ENCODE measurements at regions of chr20 and their contacts with region 1.

Region 1: GRCh38 chr20:37095599-37096414 is at the start of gene RBL1:
- DNase-seq: peak; percentile 69 to 93 (median 85)
- ATAC-seq: peak; percentile 78
- H3K4me3 ChIP-seq: peak within 1 kb of the TSS; percentile 79 to 96
- H3K4me3 Mint-ChIP-seq: peak within 1 kb of the TSS; percentile 99
- H3K27ac ChIP-seq: peak within 1 kb of the TSS; percentile 79 to 89
- H3K27ac Mint-ChIP-seq: peak within 1 kb of the TSS; percentile 99
- H3K4me1 ChIP-seq: peaks cover 18% of the 10 kb centered on the region
- H3K4me1 Mint-ChIP-seq: peaks cover 28% of the 10 kb centered on the region
- H3K27me3 ChIP-seq: no peaks in the 10 kb centered on the region
- H3K27me3 Mint-ChIP-seq: no peaks in the 10 kb centered on the region
- CTCF ChIP-seq: no peak
- total RNA-seq, gene RBL1: 29.6 to 32.6 TPM

Region 2: DNA sequence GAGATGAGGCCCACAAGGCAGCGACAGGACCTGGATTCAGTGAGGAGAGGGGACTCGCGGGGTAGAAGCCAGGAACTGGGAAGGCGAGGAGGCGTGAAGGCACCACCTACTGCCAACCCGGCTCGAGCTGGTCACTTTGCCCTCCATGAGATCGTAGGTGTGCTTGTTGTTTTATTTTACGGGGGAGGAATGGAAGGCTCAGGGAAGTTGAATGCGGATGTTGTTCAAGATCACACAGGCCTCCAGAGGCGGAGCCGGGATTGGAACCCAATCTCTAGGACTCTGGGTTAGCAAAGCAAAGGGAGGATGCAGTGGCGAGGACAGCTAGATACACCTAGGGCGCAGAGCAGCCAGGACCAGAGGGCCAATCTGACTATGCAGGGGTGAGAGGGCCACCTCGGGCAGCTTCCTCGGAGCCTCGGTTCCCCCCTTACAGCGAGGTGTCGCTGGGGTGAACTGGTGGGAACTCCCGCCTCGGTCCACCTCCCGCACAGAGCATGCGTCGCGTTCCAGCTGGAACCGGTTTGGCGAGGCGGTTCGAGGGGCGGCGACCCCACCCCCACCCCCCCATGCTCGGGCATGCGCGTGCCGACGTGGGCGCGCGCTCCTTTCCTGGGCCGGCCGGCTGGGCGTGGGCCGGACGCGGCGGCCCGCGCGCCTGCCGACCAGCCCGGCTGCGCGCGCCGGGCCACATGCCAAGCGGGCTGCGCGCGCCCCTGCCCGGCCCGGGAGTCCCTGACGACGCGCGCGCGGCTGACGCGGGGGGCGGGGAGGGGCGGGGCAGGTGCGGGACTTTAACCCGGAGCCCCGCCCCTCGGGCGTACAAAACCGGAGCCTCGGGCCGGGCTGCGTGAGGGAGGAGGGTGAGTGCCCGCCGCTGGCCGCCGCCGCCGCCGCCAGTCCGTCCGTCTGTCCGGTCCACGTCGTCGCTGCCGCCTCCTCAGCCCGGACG is 634.9 kb before region 1 on chr20:
- CTCF ChIA-PET with region 1: no interaction called
- POLR2A ChIA-PET with region 1: no interaction called
- intact Hi-C with region 1: loop called in 1 of 2 experiments (anchors 5 kb)
- DNase-seq: peak; percentile 78 to 97 (median 89)
- ATAC-seq: peak; percentile 83
- H3K4me3 ChIP-seq: peak overlapping the region; percentile 47 to 52
- H3K4me3 Mint-ChIP-seq: peak overlapping the region; percentile 80
- H3K27ac ChIP-seq: peak overlapping the region; percentile 69 to 90
- H3K27ac Mint-ChIP-seq: peak overlapping the region; percentile 89
- H3K4me1 ChIP-seq: peaks cover 45% of the 10 kb centered on the region
- H3K4me1 Mint-ChIP-seq: peaks cover 44% of the 10 kb centered on the region
- H3K27me3 ChIP-seq: no peaks in the 10 kb centered on the region
- H3K27me3 Mint-ChIP-seq: no peaks in the 10 kb centered on the region
- CTCF ChIP-seq: no peak

Region 3: DNA sequence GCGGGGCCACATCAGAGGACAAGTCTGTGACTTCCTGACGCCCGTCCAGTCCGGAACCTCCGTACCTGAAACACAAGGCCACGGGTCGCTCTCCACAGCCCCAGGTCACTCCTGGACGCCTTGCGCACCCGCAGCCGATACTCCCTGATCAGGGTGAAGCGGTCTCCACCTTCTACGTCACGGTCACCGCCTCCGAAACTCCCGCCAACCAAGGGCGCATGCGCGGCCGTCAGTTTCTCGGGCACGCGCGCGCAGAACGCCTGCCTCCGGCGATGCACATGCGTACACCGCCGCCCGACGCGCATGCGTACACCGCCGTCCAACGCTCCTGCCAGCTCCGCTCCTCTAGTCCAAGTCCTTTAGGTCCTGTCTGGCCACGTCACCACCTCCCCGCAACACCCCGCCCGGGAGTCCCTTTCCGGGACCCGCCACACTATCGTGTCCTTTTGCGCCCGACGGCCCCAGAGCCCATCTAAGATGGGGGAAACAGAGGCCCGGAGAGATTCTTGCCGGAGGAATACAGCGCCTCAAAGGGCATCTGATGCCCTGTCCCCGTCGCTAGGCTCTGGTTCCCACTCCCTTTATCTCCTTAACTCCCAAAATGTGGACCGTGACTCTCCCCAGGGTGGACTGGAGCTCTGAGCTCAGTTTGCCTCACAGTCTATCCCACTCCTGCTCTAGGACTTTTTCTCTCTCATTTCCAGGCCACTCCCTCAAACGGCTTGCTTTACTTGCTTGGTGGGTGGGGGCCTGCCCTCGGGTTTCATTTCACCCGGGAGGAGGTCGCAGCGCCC is 322.0 kb before region 1 on chr20 and contains the start of gene DSN1:
- CTCF ChIA-PET with region 1: no interaction called
- POLR2A ChIA-PET with region 1: no interaction called
- intact Hi-C with region 1: loop called in 1 of 2 experiments (anchors 5 kb)
- DNase-seq: peak; percentile 94 to 99 (median 98)
- ATAC-seq: peak; percentile 82
- H3K4me3 ChIP-seq: peak within 1 kb of the TSS; percentile 74 to 80
- H3K4me3 Mint-ChIP-seq: peak within 1 kb of the TSS; percentile 99
- H3K27ac ChIP-seq: peak within 1 kb of the TSS; percentile 66 to 92
- H3K27ac Mint-ChIP-seq: peak within 1 kb of the TSS; percentile 95
- H3K4me1 ChIP-seq: peaks cover 8% of the 10 kb centered on the region
- H3K4me1 Mint-ChIP-seq: peaks cover 11% of the 10 kb centered on the region
- H3K27me3 ChIP-seq: no peaks in the 10 kb centered on the region
- H3K27me3 Mint-ChIP-seq: no peaks in the 10 kb centered on the region
- CTCF ChIP-seq: no peak
- total RNA-seq, gene DSN1: 12.2 to 13.1 TPM

Region 4: GRCh38 chr20:37007898-37008649 is 87.7 kb before region 1 on chr20:
- CTCF ChIA-PET with region 1: interaction called, 24 read pairs
- POLR2A ChIA-PET with region 1: interaction called, 10 read pairs
- intact Hi-C with region 1: loop called (anchors 5 kb)
- DNase-seq: peak in 6 of 9 experiments; percentile 20 to 82 (median 55)
- ATAC-seq: peak; percentile 99
- H3K4me3 ChIP-seq: no peak overlapping the region
- H3K4me3 Mint-ChIP-seq: peak overlapping the region; percentile 13
- H3K27ac ChIP-seq: peak overlapping the region in 1 of 2 experiments; percentile 58
- H3K27ac Mint-ChIP-seq: peak overlapping the region; percentile 84
- H3K4me1 ChIP-seq: peaks cover 12% of the 10 kb centered on the region
- H3K4me1 Mint-ChIP-seq: peaks cover 18% of the 10 kb centered on the region
- H3K27me3 ChIP-seq: no peaks in the 10 kb centered on the region
- H3K27me3 Mint-ChIP-seq: no peaks in the 10 kb centered on the region
- CTCF ChIP-seq: peak; percentile 71

Region 5: GRCh38 chr20:37178839-37179670 is 83.2 kb after region 1 on chr20 and contains the starts of genes MROH8 and RPN2:
- CTCF ChIA-PET with region 1: interaction called, 3 read pairs
- POLR2A ChIA-PET with region 1: interaction called, 5 read pairs
- intact Hi-C with region 1: loop called (anchors 1 to 2 kb)
- DNase-seq: peak; percentile 88 to 97 (median 94)
- ATAC-seq: peak; percentile 92
- H3K4me3 ChIP-seq: peak within 1 kb of the TSS; percentile 95 to 98
- H3K4me3 Mint-ChIP-seq: peak within 1 kb of the TSS; percentile 98
- H3K27ac ChIP-seq: peak within 1 kb of the TSS; percentile 94 to 96
- H3K27ac Mint-ChIP-seq: peak within 1 kb of the TSS; percentile 98
- H3K4me1 ChIP-seq: peaks cover 26% of the 10 kb centered on the region
- H3K4me1 Mint-ChIP-seq: peaks cover 44% of the 10 kb centered on the region
- H3K27me3 ChIP-seq: no peaks in the 10 kb centered on the region
- H3K27me3 Mint-ChIP-seq: no peaks in the 10 kb centered on the region
- CTCF ChIP-seq: no peak
- total RNA-seq, gene MROH8: 0.60 to 1.1 TPM
- total RNA-seq, gene RPN2: 60.8 to 68.8 TPM

Region 6: GRCh38 chr20:37516811-37517750 is 421.3 kb after region 1 on chr20:
- CTCF ChIA-PET with region 1: no interaction called
- POLR2A ChIA-PET with region 1: no interaction called
- intact Hi-C with region 1: no loop called
- DNase-seq: no peak
- ATAC-seq: no peak
- H3K4me3 ChIP-seq: no peak overlapping the region
- H3K4me3 Mint-ChIP-seq: no peak overlapping the region
- H3K27ac ChIP-seq: no peak overlapping the region
- H3K27ac Mint-ChIP-seq: no peak overlapping the region
- H3K4me1 ChIP-seq: peaks cover 3% of the 10 kb centered on the region
- H3K4me1 Mint-ChIP-seq: peaks cover 37% of the 10 kb centered on the region
- H3K27me3 ChIP-seq: no peaks in the 10 kb centered on the region
- H3K27me3 Mint-ChIP-seq: no peaks in the 10 kb centered on the region
- CTCF ChIP-seq: no peak

Region 7: GRCh38 chr20:37527638-37528441 is 432.0 kb after region 1 on chr20 and contains the start of gene BLCAP:
- CTCF ChIA-PET with region 1: no interaction called
- POLR2A ChIA-PET with region 1: no interaction called
- intact Hi-C with region 1: loop called in 1 of 2 experiments (anchors 1 kb)
- DNase-seq: peak; percentile 88 to 96 (median 94)
- ATAC-seq: peak; percentile 90
- H3K4me3 ChIP-seq: peak within 1 kb of the TSS; percentile 93 to 100
- H3K4me3 Mint-ChIP-seq: peak within 1 kb of the TSS; percentile 85
- H3K27ac ChIP-seq: peak within 1 kb of the TSS; percentile 93 to 100
- H3K27ac Mint-ChIP-seq: peak within 1 kb of the TSS; percentile 100
- H3K4me1 ChIP-seq: peaks cover 42% of the 10 kb centered on the region
- H3K4me1 Mint-ChIP-seq: peaks cover 42% of the 10 kb centered on the region
- H3K27me3 ChIP-seq: no peaks in the 10 kb centered on the region
- H3K27me3 Mint-ChIP-seq: no peaks in the 10 kb centered on the region
- CTCF ChIP-seq: no peak
- total RNA-seq, gene BLCAP: 60.1 to 60.6 TPM

Region 8: DNA sequence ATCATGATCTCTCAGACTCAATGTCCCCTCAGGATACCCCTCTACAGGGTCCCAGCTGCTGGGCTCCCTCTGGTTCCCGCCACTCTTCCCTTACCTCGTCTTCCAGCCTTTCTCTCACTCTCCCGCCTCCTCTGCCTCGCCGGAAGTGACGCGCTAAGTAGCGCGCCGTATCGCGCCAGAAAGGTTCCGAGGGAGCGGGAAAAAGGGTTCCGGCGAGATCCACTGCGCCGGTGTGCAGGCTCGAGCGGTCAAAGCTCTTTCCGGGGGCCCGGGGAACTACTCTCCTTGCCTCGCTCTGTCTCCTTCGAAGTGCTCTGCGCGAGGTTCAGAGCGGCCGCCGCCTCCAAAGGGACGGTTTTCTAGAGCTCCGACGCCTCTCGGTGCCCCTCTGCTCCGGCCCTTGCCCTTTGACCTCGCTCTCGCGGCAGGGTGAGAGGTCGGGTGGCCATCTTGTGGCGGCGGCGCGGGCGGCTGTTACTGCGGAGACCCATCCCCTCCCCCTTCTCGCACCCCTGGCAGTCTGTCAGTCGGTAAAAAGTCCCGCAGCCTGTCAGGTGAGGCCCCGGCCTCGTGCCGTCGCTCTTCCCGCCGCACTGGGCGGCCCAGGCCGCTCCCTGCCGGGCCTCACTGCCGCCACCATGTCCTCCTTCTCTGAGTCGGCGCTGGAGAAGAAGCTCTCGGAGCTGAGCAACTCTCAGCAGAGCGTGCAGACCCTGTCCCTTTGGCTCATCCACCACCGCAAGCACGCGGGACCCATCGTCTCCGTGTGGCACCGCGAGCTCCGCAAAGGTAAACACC is 937.7 kb after region 1 on chr20 and contains the starts of genes RPRD1B and TTI1:
- CTCF ChIA-PET with region 1: no interaction called
- POLR2A ChIA-PET with region 1: no interaction called
- intact Hi-C with region 1: loop called in 1 of 2 experiments (anchors 5 kb)
- DNase-seq: peak; percentile 77 to 95 (median 88)
- ATAC-seq: peak; percentile 86
- H3K4me3 ChIP-seq: peak within 1 kb of the TSS; percentile 84 to 94
- H3K4me3 Mint-ChIP-seq: peak within 1 kb of the TSS; percentile 98
- H3K27ac ChIP-seq: peak within 1 kb of the TSS; percentile 92 to 98
- H3K27ac Mint-ChIP-seq: peak within 1 kb of the TSS; percentile 98
- H3K4me1 ChIP-seq: peaks cover 51% of the 10 kb centered on the region
- H3K4me1 Mint-ChIP-seq: peaks cover 73% of the 10 kb centered on the region
- H3K27me3 ChIP-seq: no peaks in the 10 kb centered on the region
- H3K27me3 Mint-ChIP-seq: no peaks in the 10 kb centered on the region
- CTCF ChIP-seq: no peak
- total RNA-seq, gene RPRD1B: 73.3 to 79.4 TPM
- total RNA-seq, gene TTI1: 12.6 to 15.7 TPM

Region 9: DNA sequence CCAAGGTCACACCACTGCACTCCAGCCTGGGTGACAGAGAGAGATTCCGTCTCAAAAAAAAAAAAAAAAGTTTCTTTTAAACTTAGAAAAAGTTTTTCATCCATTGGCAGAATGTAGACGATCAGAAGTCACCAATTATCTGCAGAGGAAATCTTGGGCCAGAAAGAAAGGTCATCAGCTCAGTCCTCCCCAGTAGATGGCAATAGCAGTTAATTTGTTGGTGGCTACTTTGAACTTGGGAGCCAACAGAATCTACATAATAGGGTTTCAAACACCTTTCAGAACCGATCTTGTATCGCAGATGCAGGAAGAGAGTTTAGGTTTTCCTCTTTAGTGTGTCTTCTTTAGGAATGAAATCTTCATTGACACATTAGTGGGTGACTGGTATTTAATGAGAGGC is 1292.1 kb after region 1 on chr20:
- CTCF ChIA-PET with region 1: no interaction called
- POLR2A ChIA-PET with region 1: no interaction called
- intact Hi-C with region 1: no loop called
- DNase-seq: no peak
- ATAC-seq: no peak
- H3K4me3 ChIP-seq: no peak overlapping the region
- H3K4me3 Mint-ChIP-seq: no peak overlapping the region
- H3K27ac ChIP-seq: no peak overlapping the region
- H3K27ac Mint-ChIP-seq: no peak overlapping the region
- H3K4me1 ChIP-seq: no peaks in the 10 kb centered on the region
- H3K4me1 Mint-ChIP-seq: no peaks in the 10 kb centered on the region
- H3K27me3 ChIP-seq: no peaks in the 10 kb centered on the region
- H3K27me3 Mint-ChIP-seq: peaks cover 10% of the 10 kb centered on the region
- CTCF ChIP-seq: no peak

Measured in CD8-positive, alpha-beta T cell (primary cell).